ENCODE measurements at regions of chr11 and their contacts with region 1.

Region 1: GRCh38 chr11:46238967-46239800 is 38.3 kb upstream of the CREB3L1 start:
- DNase-seq: peak; percentile 67 to 81 (median 77)
- H3K4me3 ChIP-seq: peak overlapping the region; percentile 40 to 81
- H3K4me3 Mint-ChIP-seq: peak overlapping the region; percentile 35 to 90 (median 75)
- H3K27ac ChIP-seq: no peak overlapping the region
- H3K27ac Mint-ChIP-seq: peak overlapping the region in 2 of 7 donors; percentile 42 to 60
- H3K4me1 ChIP-seq: peaks cover 30% of the 10 kb centered on the region
- H3K4me1 Mint-ChIP-seq: peaks cover 18 to 49% (median 24%) of the 10 kb centered on the region in 4 donors
- H3K27me3 ChIP-seq: peaks cover 6% of the 10 kb centered on the region
- H3K27me3 Mint-ChIP-seq: peaks cover 14 to 16% of the 10 kb centered on the region in 2 donors

Region 2: DNA sequence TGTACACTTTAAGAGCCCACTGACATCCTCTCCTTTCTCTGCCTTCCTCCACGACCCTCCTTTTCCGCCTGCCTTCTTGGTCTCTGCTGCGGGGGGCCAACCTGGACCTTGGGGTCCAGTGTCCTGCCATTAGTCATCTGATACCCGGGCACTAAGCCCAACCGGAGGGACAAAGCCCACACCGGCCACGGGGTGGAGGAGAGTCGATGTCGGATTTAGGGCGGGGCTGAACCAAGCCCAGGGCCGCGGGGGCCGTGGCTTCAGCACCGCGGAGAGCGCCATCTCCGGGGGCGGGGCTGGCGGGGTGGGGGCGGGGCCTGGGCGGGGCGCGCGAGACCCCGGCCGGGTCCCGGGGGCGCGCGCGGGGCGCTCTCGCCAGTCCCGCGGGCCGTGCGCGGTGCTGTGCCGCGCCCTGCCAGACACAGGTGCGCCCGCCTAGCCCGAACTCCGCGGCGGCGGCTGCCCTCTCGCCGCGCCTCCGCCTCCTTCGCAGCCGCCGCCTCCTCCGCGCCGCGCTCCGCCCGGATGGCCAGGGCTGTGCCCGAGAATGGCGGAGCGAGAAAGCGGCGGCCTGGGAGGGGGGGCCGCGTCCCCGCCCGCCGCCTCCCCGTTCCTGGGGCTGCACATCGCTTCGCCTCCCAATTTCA is 353.8 kb before region 1 on chr11 and contains the start of gene MAPK8IP1:
- CTCF ChIA-PET with region 1: no interaction called
- POLR2A ChIA-PET with region 1: no interaction called
- intact Hi-C with region 1: no loop called
- DNase-seq: peak; percentile 47 to 67 (median 58)
- H3K4me3 ChIP-seq: no peak within 1 kb of the TSS
- H3K4me3 Mint-ChIP-seq: peak within 1 kb of the TSS; percentile 69 to 84 (median 76)
- H3K27ac ChIP-seq: no peak within 1 kb of the TSS
- H3K27ac Mint-ChIP-seq: peak within 1 kb of the TSS in 6 of 7 donors; percentile 29 to 75 (median 52)
- H3K4me1 ChIP-seq: peaks cover 5% of the 10 kb centered on the region
- H3K4me1 Mint-ChIP-seq: peaks cover 8 to 16% (median 11%) of the 10 kb centered on the region in 4 donors
- H3K27me3 ChIP-seq: no peaks in the 10 kb centered on the region
- H3K27me3 Mint-ChIP-seq: peaks cover 0 to 4% of the 10 kb centered on the region in 2 donors
- total RNA-seq, gene MAPK8IP1: 0.73 to 0.86 TPM

Region 3: DNA sequence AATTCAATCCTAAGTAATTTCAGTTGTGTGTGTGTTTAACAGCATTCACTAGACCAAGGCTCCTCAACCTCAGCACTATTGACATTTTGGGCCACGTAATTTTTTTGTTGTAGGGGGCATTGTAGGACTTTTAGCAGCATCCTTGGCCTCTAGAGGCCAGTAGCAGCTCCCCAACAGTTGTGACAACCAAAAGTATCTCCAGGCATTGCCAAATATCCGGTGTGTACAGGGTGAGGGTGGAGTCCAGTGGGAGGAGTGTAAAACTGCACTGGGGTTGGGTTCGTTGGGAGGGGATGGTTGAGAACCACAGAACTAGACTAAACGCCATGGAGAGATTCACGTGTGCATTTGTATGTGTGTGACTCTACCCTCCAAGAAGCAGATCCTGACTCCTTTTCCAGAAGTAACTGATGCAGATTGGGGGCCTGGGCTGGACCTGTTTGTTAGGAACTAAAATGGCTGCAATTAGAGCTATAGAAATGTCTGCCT is 112.0 kb before region 1 on chr11:
- CTCF ChIA-PET with region 1: interaction called, 4 read pairs
- POLR2A ChIA-PET with region 1: interaction called, 6 read pairs
- intact Hi-C with region 1: loop called (anchors 1 kb)
- DNase-seq: peak; percentile 68 to 82 (median 77)
- H3K4me3 ChIP-seq: no peak overlapping the region
- H3K4me3 Mint-ChIP-seq: peak overlapping the region; percentile 1 to 62 (median 46)
- H3K27ac ChIP-seq: no peak overlapping the region
- H3K27ac Mint-ChIP-seq: peak overlapping the region; percentile 26 to 82 (median 78)
- H3K4me1 ChIP-seq: peaks cover 19% of the 10 kb centered on the region
- H3K4me1 Mint-ChIP-seq: peaks cover 12 to 26% (median 18%) of the 10 kb centered on the region in 4 donors
- H3K27me3 ChIP-seq: no peaks in the 10 kb centered on the region
- H3K27me3 Mint-ChIP-seq: no peaks in the 10 kb centered on the region

Region 4: DNA sequence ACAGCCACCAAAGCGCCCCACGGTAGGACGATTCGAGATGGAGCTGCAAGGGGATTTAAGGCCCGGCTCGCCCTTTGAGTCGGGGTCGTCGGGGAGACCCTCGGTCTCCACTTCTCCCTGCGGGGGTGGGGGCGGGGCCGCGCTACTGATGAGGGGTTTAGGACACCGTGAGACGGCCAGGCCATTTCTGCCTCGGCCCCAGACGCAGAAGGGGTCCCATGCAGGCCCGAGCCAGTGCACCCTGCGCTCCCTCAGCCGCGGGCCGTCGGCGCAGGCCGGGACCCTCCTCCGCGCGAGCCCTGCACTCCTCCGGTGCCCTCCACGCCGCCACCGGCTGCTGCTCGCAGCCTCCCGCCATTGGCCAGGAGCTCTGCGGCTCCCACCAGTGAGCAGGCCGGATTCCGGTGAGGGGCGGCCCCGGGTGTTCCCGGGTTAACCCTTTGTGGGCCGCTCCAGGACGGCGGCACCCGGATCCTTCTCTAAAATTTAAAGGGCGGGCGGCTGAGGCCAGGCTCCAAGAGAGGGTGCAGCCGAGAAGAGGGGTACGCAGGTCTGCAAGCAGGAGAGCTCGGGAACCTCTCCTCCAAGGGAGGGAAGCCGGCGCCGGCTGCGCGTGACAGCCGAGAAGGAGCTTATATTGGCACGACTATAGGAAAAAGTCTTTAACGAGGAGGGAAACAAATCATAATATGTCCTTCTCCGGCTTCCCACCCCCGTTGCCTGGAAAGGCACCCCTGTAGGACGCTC is 56.3 kb after region 1 on chr11:
- CTCF ChIA-PET with region 1: interaction called, 15 read pairs
- POLR2A ChIA-PET with region 1: interaction called, 3 read pairs
- intact Hi-C with region 1: no loop called
- DNase-seq: peak; percentile 73 to 79 (median 75)
- H3K4me3 ChIP-seq: peak overlapping the region; percentile 5 to 64
- H3K4me3 Mint-ChIP-seq: peak overlapping the region; percentile 80 to 93 (median 86)
- H3K27ac ChIP-seq: no peak overlapping the region
- H3K27ac Mint-ChIP-seq: peak overlapping the region in 1 of 7 donors; percentile 72
- H3K4me1 ChIP-seq: peaks cover 10% of the 10 kb centered on the region
- H3K4me1 Mint-ChIP-seq: peaks cover 3 to 11% (median 5%) of the 10 kb centered on the region in 4 donors
- H3K27me3 ChIP-seq: peaks cover 7% of the 10 kb centered on the region
- H3K27me3 Mint-ChIP-seq: peaks cover 2 to 7% of the 10 kb centered on the region in 2 donors

Region 5: DNA sequence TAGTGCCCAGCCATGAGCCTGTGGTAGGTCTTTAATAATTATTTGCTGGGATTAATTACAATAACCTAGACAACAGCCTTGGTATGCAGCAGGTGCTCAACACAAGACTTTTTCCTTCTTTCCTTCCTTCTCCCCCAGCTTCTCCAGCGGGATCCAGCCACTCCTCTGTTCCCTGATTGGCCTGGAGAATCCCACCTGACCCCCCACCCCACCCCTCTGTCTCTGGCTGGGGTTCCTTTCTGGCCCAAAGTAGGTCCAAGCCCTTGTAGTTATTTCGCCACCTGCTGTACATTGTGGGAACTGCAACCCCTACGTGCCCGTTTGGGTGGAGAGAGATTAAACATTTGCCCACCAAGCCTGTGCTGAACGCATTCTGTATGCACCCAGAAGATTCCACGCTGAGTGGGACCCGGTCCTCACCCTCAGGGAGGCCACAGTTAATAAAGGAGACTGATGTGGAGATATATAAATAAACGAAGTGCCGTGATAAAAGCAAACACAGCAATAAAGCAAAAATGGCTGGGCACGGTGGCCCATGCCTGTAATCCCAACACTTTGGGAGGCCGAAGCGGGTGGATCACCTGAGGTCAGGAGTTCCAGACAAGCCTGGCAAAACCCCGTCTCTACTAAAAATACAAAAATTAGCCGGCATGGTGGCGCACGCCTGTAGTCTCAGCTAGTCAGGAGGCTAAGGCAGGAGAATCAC is 76.0 kb after region 1 on chr11:
- CTCF ChIA-PET with region 1: interaction called, 279 read pairs
- POLR2A ChIA-PET with region 1: interaction called, 3 read pairs
- intact Hi-C with region 1: loop called (anchors 1 kb)
- DNase-seq: peak; percentile 57 to 73 (median 66)
- H3K4me3 ChIP-seq: no peak overlapping the region
- H3K4me3 Mint-ChIP-seq: peak overlapping the region in 1 of 8 donors; percentile 26
- H3K27ac ChIP-seq: no peak overlapping the region
- H3K27ac Mint-ChIP-seq: peak overlapping the region in 1 of 7 donors; percentile 65
- H3K4me1 ChIP-seq: peaks cover 17% of the 10 kb centered on the region
- H3K4me1 Mint-ChIP-seq: peaks cover 11 to 28% (median 20%) of the 10 kb centered on the region in 4 donors
- H3K27me3 ChIP-seq: no peaks in the 10 kb centered on the region
- H3K27me3 Mint-ChIP-seq: no peaks in the 10 kb centered on the region

Region 6: DNA sequence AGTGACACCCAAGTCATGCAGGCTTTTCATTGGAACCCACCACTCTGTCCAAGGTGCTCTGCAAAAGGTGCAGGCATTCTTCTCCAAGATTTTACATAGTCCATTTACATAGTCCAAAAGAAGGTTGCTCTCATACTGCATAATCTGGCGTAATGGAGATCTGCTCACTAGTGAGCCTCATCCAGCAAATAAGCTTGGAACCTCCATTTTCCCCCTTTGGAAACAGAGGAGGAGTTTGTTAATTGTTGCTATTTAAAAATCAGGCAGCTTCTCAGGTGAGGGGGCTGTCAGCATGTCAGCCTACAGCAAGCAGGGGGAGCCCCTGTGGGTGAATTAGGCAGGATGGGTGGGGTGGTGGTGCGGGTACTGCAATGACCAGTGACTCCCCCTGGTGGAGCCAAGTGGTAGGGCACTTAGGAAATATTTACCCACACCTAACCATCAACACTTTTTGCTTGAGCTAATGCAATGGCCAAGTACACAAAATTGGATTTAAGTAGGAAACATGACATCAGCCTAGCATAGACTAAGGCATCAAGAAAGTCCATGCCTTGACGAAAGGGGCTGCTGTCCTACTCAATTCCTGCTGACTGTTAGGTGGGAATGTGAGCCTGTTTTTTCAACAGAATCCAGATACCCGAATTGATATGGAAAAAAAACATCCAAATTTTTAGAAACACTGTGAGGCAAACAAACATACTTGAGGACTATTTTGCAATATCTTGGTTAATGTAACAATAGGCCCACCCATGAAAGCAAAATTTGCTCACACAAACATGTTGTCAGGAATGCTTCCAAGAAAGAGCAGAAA is 290.1 kb after region 1 on chr11:
- CTCF ChIA-PET with region 1: interaction called, 19 read pairs
- POLR2A ChIA-PET with region 1: no interaction called
- intact Hi-C with region 1: loop called (anchors 1 kb)
- DNase-seq: peak; percentile 64 to 78 (median 67)
- H3K4me3 ChIP-seq: no peak overlapping the region
- H3K4me3 Mint-ChIP-seq: no peak overlapping the region
- H3K27ac ChIP-seq: no peak overlapping the region
- H3K27ac Mint-ChIP-seq: peak overlapping the region in 4 of 7 donors; percentile 10 to 86 (median 53)
- H3K4me1 ChIP-seq: peaks cover 12% of the 10 kb centered on the region
- H3K4me1 Mint-ChIP-seq: peaks cover 28 to 50% (median 38%) of the 10 kb centered on the region in 4 donors
- H3K27me3 ChIP-seq: no peaks in the 10 kb centered on the region
- H3K27me3 Mint-ChIP-seq: no peaks in the 10 kb centered on the region

Measured in CD4-positive, alpha-beta memory T cell (primary cell).